Activated CD4-positive, alpha-beta memory T cell treated with anti-CD3 and anti-CD28 coated beads for 36 hours (primary cell): ENCODE measurements at regions of chr1 and their contacts with region 1.

Region 1: DNA sequence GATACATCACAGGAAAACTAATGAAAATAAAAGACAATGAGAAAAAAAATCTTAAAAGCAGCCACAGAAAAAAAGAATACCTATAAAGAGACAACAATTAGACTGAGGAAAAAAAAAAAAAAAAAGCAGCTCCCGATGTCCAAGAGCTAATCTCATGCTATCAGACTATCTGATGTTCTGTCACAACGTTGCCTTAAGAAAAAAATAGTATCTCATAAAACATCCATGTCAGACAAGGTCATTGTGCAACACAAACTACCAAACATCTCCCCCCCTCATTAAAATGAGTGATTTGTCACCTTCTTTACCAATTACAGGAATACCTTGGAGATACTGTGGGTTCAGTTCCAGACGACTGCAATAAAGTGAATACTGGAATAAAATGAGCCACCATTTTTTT is 68.9 kb downstream of the ZNF644 start:
- DNase-seq: no peak
- H3K4me3 Mint-ChIP-seq: no peak overlapping the region
- H3K27ac Mint-ChIP-seq: no peak overlapping the region
- H3K4me1 Mint-ChIP-seq: peaks cover 67% of the 10 kb centered on the region
- H3K27me3 Mint-ChIP-seq: no peaks in the 10 kb centered on the region

Region 2: DNA sequence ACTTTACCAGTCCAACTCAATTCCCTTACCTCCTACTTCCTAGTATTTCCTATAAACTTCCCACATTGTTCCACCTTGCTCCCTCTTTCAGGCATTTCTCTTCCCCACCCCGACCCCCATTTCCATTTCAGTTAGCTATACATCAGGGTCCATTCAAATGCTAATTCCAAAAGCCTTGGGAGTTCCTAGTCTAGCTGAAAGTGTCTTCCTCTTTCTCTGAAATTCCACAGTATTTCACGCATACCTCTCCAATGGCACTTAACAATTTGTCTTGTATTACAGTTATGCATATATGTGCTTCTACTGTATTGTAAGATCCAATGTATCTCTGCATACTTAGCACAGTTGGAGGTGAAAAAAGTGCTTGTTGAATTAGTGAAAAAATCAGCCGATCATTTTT is 25.9 kb before region 1 on chr1:
- CTCF ChIA-PET with region 1: no interaction called
- POLR2A ChIA-PET with region 1: interaction called, 3 read pairs
- intact Hi-C with region 1: loop called (anchors 2 kb)
- DNase-seq: no peak
- H3K4me3 Mint-ChIP-seq: no peak overlapping the region
- H3K27ac Mint-ChIP-seq: no peak overlapping the region
- H3K4me1 Mint-ChIP-seq: peaks cover 67% of the 10 kb centered on the region
- H3K27me3 Mint-ChIP-seq: no peaks in the 10 kb centered on the region